Dorsolateral prefrontal cortex (tissue), 120 donors: ENCODE measurements at regions of chr19 and their contacts with region 1.

Region 1: GRCh38 chr19:1672038-1672768 is 19.8 kb upstream of the TCF3 start:
- DNase-seq: peak in 1 of 10 donors; percentile 23
- H3K4me3 ChIP-seq: peak overlapping the region in 23 of 59 donors; percentile 3 to 50 (median 27)
- H3K27ac ChIP-seq: no peak overlapping the region
- H3K27me3 ChIP-seq: peaks cover 0 to 93% (median 82%) of the 10 kb centered on the region in 45 donors
- CTCF ChIP-seq: peak; percentile 45 to 92 (median 75)

Region 2: GRCh38 chr19:1624458-1624857 is 47.7 kb before region 1 on chr19:
- intact Hi-C with region 1: no loop called
- DNase-seq: peak in 6 of 10 donors; percentile 21 to 59 (median 44)
- H3K4me3 ChIP-seq: no peak overlapping the region
- H3K27ac ChIP-seq: peak overlapping the region in 1 of 59 donors; percentile 3
- H3K27me3 ChIP-seq: no peaks in the 10 kb centered on the region
- CTCF ChIP-seq: peak in 55 of 56 donors; percentile 31 to 76 (median 61)

Region 3: DNA sequence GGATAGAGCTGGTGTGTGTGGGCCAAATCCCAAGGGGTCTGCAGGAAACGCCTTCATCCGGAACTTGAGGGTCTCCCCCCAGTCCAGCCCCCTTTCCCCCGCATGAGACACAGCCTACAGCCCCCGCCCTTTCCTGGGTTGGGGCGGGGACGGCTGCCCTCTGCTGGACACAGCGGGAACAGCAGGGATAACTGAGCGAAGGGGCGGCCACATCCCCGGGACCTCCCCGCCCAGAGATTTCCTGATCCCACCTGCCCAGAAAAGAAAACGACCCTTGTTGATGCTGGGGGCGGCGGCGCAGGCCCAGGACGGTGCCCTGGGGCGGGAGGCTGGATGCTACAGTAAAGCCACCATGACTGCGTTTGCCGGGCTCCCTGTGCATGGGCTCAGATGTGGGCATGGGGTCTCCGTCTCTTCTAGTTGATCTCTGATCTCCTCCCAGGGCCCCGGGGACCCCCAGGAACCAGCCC is 95.3 kb after region 1 on chr19:
- intact Hi-C with region 1: loop called (anchors 5 kb)
- DNase-seq: peak in 5 of 10 donors; percentile 10 to 66 (median 28)
- H3K4me3 ChIP-seq: no peak overlapping the region
- H3K27ac ChIP-seq: no peak overlapping the region
- H3K27me3 ChIP-seq: peaks cover 7 to 98% (median 78%) of the 10 kb centered on the region in 45 donors
- CTCF ChIP-seq: peak; percentile 51 to 95 (median 87)

Region 4: DNA sequence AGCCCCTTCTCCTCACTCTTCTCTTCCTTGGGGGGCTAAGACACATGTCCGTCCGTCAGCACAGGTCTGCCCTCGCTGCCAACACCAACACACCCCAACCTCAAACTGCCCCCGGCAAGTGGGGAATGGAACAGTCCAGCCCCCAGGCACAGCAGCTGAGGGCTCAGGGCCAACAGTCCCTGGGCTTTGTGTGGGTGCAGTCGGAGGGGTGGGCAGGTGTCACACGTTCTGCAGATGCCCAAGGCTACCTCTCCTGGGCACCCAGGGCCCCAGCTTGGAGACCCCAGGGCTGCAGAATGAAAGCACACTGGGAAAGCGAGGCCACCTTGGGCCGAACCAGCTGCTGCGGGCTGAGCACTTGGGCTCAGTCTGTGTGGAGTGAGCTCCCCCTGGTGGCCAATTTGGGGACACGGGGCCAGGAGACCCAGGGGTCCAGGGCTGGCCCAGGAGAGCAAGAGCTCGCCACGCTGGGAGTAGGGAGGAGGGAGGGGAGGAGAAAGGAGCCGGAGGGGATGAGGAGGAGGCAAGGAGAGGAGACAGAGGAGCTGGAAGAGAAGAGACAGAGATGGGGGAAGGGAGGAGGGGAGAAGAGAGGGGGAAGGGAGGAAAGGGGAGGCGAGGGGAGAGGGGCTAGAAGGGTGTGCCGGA is 153.8 kb after region 1 on chr19:
- intact Hi-C with region 1: loop called in 1 of 2 experiments (anchors 2 kb)
- DNase-seq: peak; percentile 65 to 81 (median 72)
- H3K4me3 ChIP-seq: peak overlapping the region in 1 of 59 donors; percentile 7
- H3K27ac ChIP-seq: peak overlapping the region in 2 of 59 donors; percentile 4 to 39
- H3K27me3 ChIP-seq: no peaks in the 10 kb centered on the region
- CTCF ChIP-seq: peak; percentile 59 to 95 (median 85)